IMR-90 (cell line): ENCODE measurements at regions of chr17 and their contacts with region 1.

Region 1: DNA sequence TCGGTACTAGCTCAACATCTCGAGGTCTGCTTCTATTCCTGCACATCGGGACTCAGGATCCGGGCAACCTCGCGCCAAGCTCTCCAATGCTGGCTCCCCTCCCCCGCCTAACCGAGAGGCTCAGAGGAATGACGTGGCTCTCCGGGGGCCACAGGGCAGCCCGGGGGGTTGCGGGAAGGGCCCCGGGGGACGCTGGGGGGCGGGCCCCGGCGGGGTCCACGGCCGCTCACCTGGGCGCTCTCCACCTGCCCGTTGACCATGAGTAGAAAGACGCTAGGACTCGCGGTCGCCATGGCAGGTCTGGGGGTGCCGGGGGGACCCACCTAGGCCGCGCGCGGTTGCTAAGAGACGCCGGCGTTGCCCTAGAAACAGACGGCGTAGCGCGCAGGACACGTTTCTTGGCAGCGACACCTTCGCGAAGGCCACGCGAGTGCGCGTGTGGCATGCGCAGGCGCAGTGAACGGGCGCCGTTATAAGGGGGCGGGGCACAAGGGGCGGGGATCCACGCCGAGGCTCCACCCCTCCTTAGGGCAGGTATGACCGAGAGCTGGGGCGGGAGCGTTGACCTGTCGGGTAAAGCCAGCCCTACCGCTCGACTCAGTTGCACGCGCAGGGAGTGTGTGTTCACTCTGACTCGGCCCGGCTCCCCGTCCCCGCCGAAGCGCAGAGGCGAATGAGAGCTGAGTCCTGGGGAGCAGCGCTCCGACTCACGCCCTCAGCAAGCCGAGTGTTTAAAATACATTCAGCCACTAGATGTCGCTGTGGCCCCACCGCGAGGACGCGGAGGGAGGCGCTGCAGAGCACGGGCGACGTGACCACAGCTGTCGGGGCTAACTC is at the start of gene B9D1:
- DNase-seq: peak; percentile 89
- ATAC-seq: peak; percentile 93
- H3K4me3 ChIP-seq: peak within 1 kb of the TSS; percentile 77
- H3K27ac ChIP-seq: peak within 1 kb of the TSS; percentile 51
- H3K4me1 ChIP-seq: peaks cover 10% of the 10 kb centered on the region
- H3K27me3 ChIP-seq: no peaks in the 10 kb centered on the region
- CTCF ChIP-seq: peak; percentile 99
- POLR2A ChIP-seq: peak; percentile 64; the same call in 1 of the 2 replicates
- RAD21 ChIP-seq: peak; percentile 99
- total RNA-seq, gene B9D1: 23.3 and 42.5 TPM in 2 replicates

Region 2: DNA sequence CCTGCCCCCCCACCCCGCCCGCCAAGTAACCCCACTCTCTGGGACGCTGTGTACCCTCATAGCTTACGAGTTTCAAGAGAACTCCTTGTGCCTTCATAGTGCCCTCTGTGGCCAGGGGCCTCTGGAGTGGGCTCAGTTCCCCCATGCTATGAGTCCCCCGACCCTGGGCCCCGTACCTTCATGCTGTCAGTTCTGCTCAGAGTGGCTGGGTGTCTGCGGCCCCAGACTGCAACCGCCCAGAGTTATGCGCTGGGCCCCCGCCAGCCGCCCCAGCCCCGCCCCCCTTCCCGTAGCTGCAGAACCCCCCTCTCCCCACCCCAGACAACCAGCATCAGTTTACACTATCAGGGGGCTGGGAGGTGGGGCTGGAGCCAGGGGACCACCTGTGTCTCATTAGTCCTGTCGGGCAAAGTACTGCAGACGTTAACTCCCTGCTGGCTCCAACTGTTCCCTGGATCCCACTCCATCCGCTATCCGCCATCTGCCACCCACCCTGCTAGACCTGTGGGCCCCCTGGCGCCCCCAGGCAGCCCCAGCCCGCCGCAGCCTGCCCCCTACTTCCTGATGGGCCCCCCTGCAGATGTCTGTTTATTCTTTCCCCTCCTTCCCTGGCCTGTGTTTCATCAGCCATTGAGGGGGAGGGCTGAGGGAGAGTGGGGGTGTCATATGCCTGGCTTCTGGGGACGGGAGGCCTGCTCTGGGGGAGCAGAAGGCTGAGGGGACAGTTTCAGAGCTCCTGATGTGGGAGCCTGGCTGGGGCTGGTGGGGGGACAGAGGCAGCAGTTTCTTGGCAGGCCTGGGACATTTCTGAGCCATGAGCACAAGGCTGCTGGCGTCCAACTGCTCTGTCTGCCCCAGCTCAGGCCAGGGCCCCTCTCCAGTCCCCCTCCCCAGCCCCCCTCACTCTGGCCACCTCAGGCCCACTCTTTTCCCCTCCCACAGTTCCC is 24.8 kb after region 1 on chr17 and contains the start of gene MFAP4:
- CTCF ChIA-PET with region 1: interaction called, 5 read pairs
- POLR2A ChIA-PET with region 1: no interaction called
- dilution Hi-C with region 1: no loop called
- in situ Hi-C with region 1: no loop called
- intact Hi-C with region 1: loop called (anchors 1 kb)
- DNase-seq: peak; percentile 90
- ATAC-seq: peak; percentile 43
- H3K4me3 ChIP-seq: peak within 1 kb of the TSS; percentile 57
- H3K27ac ChIP-seq: peak within 1 kb of the TSS; percentile 96
- H3K4me1 ChIP-seq: peaks cover 52% of the 10 kb centered on the region
- H3K27me3 ChIP-seq: no peaks in the 10 kb centered on the region
- CTCF ChIP-seq: no peak
- POLR2A ChIP-seq: no peak
- RAD21 ChIP-seq: no peak
- total RNA-seq, gene MFAP4: 5.0 and 7.0 TPM in 2 replicates

Region 3: GRCh38 chr17:19410875-19411620 is 48.6 kb after region 1 on chr17 and contains the start of gene RNF112:
- CTCF ChIA-PET with region 1: interaction called, 12 read pairs
- POLR2A ChIA-PET with region 1: interaction called, 3 read pairs
- dilution Hi-C with region 1: no loop called
- in situ Hi-C with region 1: no loop called
- intact Hi-C with region 1: no loop called
- DNase-seq: peak; percentile 56
- ATAC-seq: peak; percentile 78
- H3K4me3 ChIP-seq: no peak within 1 kb of the TSS
- H3K27ac ChIP-seq: no peak within 1 kb of the TSS
- H3K4me1 ChIP-seq: peaks cover 11% of the 10 kb centered on the region; the same call in 1 of the 2 replicates
- H3K27me3 ChIP-seq: no peaks in the 10 kb centered on the region
- CTCF ChIP-seq: 0 out of 2 replicates have a peak, but pooled peaks have one; percentile 25
- POLR2A ChIP-seq: no peak
- RAD21 ChIP-seq: no peak
- total RNA-seq, gene RNF112: 1.7 and 2.5 TPM in 2 replicates

Region 4: DNA sequence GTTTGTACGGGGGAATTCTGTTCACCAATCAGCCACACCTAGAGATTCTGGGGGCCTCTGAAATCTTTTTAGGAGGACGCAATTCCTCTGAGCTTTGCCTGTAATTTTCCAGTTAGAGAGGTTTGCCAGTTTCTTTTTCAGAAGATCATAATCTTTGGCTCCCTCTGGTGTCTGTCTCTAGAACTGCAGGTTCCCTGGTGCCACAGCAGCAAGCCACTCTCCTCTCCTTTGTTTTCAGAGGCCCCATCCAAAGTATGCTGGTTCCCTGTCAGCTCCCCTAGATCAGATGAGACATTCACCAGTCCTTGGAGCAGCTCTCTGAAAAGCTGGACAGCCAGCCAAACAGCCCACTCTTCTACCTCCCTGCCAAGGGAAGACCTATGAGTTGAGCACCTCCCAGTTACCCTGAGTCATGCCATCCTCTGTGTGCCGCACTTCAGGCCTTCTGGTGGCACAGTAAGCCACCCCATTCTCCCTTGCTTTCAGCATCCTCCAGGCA is 84.6 kb after region 1 on chr17:
- CTCF ChIA-PET with region 1: interaction called, 44 read pairs
- POLR2A ChIA-PET with region 1: interaction called, 4 read pairs
- dilution Hi-C with region 1: no loop called
- in situ Hi-C with region 1: loop called (anchors 5 kb)
- intact Hi-C with region 1: loop called (anchors 1 kb)
- DNase-seq: peak; percentile 70
- ATAC-seq: peak; percentile 65
- H3K4me3 ChIP-seq: no peak overlapping the region
- H3K27ac ChIP-seq: peak overlapping the region; percentile 65; the same call in 1 of the 2 replicates
- H3K4me1 ChIP-seq: peaks cover 17% of the 10 kb centered on the region
- H3K27me3 ChIP-seq: peaks cover 2% of the 10 kb centered on the region; the same call in 1 of the 2 replicates
- CTCF ChIP-seq: peak; percentile 90
- POLR2A ChIP-seq: 0 out of 2 replicates have a peak, but pooled peaks have one; percentile 21
- RAD21 ChIP-seq: peak; percentile 88

Region 5: DNA sequence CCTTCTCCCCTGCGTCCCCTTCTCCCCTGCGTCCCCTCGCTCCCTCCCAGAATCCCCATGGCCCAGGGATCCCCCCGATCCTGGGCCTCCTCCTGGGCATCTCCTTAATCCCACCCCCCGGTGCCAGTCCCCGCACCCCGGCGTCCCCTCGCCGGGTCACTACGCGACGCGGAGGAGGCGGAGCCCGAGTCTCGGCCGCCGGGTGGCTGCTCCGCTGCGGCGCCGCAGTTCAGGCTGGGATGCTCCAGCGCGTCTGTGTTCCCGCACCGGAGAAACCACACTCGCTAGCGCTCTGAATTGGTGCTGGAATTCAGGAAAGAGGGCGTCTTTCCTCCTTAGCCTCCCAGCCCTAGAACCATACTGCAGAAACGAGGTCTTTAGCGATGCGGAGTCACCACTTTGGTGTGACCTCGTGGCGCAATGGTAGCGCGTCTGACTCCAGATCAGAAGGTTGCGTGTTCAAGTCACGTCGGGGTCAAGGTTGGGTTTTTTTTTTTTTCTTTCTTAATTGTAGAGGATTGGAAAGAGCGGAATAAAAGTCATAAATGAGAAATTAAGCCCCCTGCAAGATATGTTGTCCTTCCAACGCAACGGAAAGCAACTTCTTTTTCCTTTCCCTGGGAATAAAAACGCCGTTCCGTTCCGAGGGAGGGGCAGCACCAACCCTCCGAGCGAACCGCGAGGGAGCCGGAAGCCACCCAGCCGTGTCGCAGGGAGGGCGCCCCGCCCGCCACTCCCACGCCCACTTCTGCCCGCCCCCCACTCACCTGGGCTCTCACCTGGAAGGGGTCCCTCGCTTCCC is 145.5 kb after region 1 on chr17:
- CTCF ChIA-PET with region 1: interaction called, 3 read pairs
- POLR2A ChIA-PET with region 1: no interaction called
- dilution Hi-C with region 1: no loop called
- in situ Hi-C with region 1: loop called (anchors 5 kb)
- intact Hi-C with region 1: loop called (anchors 1 kb)
- DNase-seq: peak; percentile 92
- ATAC-seq: peak; percentile 98
- H3K4me3 ChIP-seq: peak overlapping the region; percentile 36
- H3K27ac ChIP-seq: peak overlapping the region; percentile 59
- H3K4me1 ChIP-seq: no peaks in the 10 kb centered on the region
- H3K27me3 ChIP-seq: no peaks in the 10 kb centered on the region
- CTCF ChIP-seq: no peak
- POLR2A ChIP-seq: no peak
- RAD21 ChIP-seq: no peak

Region 6: GRCh38 chr17:19648475-19649406 is 286.2 kb after region 1 on chr17 and contains the start of gene ALDH3A2:
- CTCF ChIA-PET with region 1: no interaction called
- POLR2A ChIA-PET with region 1: no interaction called
- dilution Hi-C with region 1: no loop called
- in situ Hi-C with region 1: no loop called
- intact Hi-C with region 1: loop called (anchors 5 kb)
- DNase-seq: peak; percentile 79
- ATAC-seq: peak; percentile 96
- H3K4me3 ChIP-seq: peak within 1 kb of the TSS; percentile 72
- H3K27ac ChIP-seq: peak within 1 kb of the TSS; percentile 64
- H3K4me1 ChIP-seq: peaks cover 8% of the 10 kb centered on the region
- H3K27me3 ChIP-seq: peaks cover 26% of the 10 kb centered on the region
- CTCF ChIP-seq: no peak
- POLR2A ChIP-seq: peak; percentile 52; the same call in 1 of the 2 replicates
- RAD21 ChIP-seq: no peak
- total RNA-seq, gene ALDH3A2: 6.9 and 7.9 TPM in 2 replicates

Region 7: DNA sequence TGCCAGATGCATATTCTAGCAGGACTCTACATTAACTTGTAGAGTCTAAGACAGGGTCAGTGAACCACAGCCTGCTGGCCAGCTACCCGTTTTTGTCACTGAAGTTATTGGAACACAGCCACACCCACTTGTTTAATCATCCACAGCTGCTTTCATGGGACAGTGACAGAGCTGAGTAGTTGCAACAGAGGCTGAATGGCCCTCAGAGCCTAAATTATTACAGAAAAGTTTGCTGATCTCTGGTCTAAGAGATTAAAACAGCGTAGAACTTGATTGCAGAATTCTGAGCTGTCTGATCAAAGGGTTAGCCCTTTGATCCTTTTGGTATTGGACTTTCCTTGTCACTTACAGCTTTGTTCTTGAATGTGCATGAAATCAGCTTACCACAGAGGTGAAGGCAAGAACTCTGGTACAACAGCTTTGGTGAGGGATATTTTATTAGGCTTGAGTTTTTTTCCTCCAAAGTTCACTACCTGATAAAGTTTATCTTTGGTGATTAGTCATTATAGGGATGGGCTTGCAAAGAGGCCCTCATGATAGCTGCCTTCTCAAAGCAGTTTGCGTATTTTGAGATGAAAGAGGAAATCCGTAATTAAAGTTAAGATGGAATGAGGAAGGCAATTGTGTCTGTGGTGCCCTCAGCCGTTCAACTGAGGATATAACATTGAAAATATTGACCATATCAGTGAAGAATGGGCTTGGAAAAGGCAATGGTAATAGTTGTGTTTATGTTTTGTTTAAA is 309.7 kb after region 1 on chr17:
- CTCF ChIA-PET with region 1: no interaction called
- POLR2A ChIA-PET with region 1: no interaction called
- dilution Hi-C with region 1: no loop called
- in situ Hi-C with region 1: no loop called
- intact Hi-C with region 1: loop called (anchors 5 kb)
- DNase-seq: peak; percentile 8
- ATAC-seq: no peak; the same call in 1 of the 2 replicates
- H3K4me3 ChIP-seq: no peak overlapping the region
- H3K27ac ChIP-seq: no peak overlapping the region
- H3K4me1 ChIP-seq: no peaks in the 10 kb centered on the region
- H3K27me3 ChIP-seq: peaks cover 2% of the 10 kb centered on the region; the same call in 1 of the 2 replicates
- CTCF ChIP-seq: peak; percentile 37
- POLR2A ChIP-seq: no peak
- RAD21 ChIP-seq: peak; percentile 37